Adrenal gland (tissue), 19 donors: ENCODE measurements at regions of chr4 and their contacts with region 1.

Region 1: GRCh38 chr4:120293341-120293740 is 226.7 kb upstream of the MAD2L1 start:
- DNase-seq: no peak
- H3K4me3 ChIP-seq: no peak overlapping the region
- H3K27ac ChIP-seq: no peak overlapping the region
- H3K4me1 ChIP-seq: no peaks in the 10 kb centered on the region
- H3K27me3 ChIP-seq: no peaks in the 10 kb centered on the region
- CTCF ChIP-seq: no peak
- POLR2A ChIP-seq: no peak

Region 2: DNA sequence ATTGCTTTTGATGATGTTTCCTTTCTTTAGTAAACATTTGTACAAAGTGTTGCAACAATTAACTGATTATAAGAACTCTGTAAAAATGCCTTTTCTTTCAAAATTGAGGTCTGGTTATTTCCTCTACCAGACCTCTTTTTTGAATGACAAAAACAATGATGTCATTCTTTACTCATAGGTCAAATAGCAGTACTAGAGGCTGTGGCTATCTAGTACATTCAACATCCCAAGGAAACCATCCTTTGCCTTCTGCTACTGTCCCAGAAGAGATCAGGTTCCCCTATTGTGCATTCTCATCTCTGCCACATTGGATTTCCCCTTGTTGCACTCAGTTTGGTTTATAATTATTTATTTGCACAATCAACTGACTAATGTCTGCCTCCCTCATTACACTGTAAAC is 207.6 kb before region 1 on chr4:
- intact Hi-C with region 1: no loop called
- DNase-seq: no peak
- H3K4me3 ChIP-seq: no peak overlapping the region
- H3K27ac ChIP-seq: no peak overlapping the region
- H3K4me1 ChIP-seq: no peaks in the 10 kb centered on the region
- H3K27me3 ChIP-seq: no peaks in the 10 kb centered on the region
- CTCF ChIP-seq: no peak
- POLR2A ChIP-seq: no peak

Region 3: DNA sequence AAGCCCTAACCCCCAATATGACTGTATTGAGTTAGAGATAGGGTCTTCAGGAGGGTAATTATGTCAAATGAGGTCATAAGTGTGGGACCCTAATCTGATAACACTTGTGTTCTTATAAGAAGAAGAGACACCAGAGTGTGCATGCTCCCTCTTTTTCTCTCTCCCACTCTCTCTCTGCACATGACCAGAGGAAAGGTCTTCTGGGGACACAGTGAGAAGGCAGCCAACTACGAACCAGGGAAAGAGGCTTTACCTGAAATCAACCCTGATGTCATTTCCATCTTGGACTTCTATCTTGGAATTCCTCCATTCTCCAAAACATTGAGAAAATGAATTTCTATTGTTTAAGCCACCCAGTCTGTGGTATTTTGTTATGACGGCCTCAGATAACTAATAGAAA is 129.4 kb before region 1 on chr4:
- intact Hi-C with region 1: no loop called
- DNase-seq: no peak
- H3K4me3 ChIP-seq: no peak overlapping the region
- H3K27ac ChIP-seq: no peak overlapping the region
- H3K4me1 ChIP-seq: no peaks in the 10 kb centered on the region
- H3K27me3 ChIP-seq: no peaks in the 10 kb centered on the region
- CTCF ChIP-seq: no peak
- POLR2A ChIP-seq: no peak

Region 4: GRCh38 chr4:121648516-121648915 is 1355.2 kb after region 1 on chr4:
- intact Hi-C with region 1: loop called in 1 of 2 experiments (anchors 10 kb)
- DNase-seq: no peak
- H3K4me3 ChIP-seq: no peak overlapping the region
- H3K27ac ChIP-seq: no peak overlapping the region
- H3K4me1 ChIP-seq: no peaks in the 10 kb centered on the region
- H3K27me3 ChIP-seq: no peaks in the 10 kb centered on the region
- CTCF ChIP-seq: no peak
- POLR2A ChIP-seq: no peak